PC-9 (cell line): ENCODE measurements at regions of chr15 and their contacts with region 1.

Region 1: DNA sequence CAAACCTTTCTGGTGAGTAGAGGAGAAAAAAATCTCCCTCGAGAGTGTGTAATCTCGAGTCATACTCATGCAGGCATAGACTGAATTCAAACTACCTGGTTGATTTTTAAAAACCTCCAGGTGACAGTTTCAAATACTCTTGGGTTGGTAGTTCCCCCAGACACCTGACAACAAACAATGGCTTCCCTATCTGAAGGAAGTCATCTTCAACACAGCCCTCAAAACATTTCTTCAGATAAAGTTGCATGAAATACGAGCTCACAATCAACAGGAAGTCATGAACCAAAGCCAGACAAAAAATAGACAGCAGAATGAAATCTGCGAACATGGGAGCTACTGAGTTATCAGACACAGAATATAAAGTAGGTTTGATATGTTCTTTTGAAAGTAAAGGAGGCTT is 112.8 kb downstream of the ST8SIA2 start:
- DNase-seq: no peak
- H3K4me3 ChIP-seq: no peak overlapping the region
- H3K27ac ChIP-seq: no peak overlapping the region
- H3K4me1 ChIP-seq: no peaks in the 10 kb centered on the region
- H3K27me3 ChIP-seq: peaks cover 16% of the 10 kb centered on the region
- CTCF ChIP-seq: no peak

Region 2: GRCh38 chr15:92415639-92416297 is 90.7 kb before region 1 on chr15:
- CTCF ChIA-PET with region 1: no interaction called
- POLR2A ChIA-PET with region 1: interaction called, 12 read pairs
- intact Hi-C with region 1: no loop called
- DNase-seq: no peak
- H3K4me3 ChIP-seq: no peak overlapping the region
- H3K27ac ChIP-seq: no peak overlapping the region
- H3K4me1 ChIP-seq: no peaks in the 10 kb centered on the region
- H3K27me3 ChIP-seq: peaks cover 24% of the 10 kb centered on the region
- CTCF ChIP-seq: no peak

Region 3: GRCh38 chr15:92625251-92625980 is 118.9 kb after region 1 on chr15:
- CTCF ChIA-PET with region 1: no interaction called
- POLR2A ChIA-PET with region 1: no interaction called
- intact Hi-C with region 1: no loop called
- DNase-seq: peak in 1 of 2 experiments; percentile 69
- H3K4me3 ChIP-seq: no peak overlapping the region
- H3K27ac ChIP-seq: peak overlapping the region; percentile 50
- H3K4me1 ChIP-seq: peaks cover 10% of the 10 kb centered on the region
- H3K27me3 ChIP-seq: no peaks in the 10 kb centered on the region
- CTCF ChIP-seq: no peak